H1 (cell line): ENCODE measurements at regions of chr1 and their contacts with region 1.

Region 1: DNA sequence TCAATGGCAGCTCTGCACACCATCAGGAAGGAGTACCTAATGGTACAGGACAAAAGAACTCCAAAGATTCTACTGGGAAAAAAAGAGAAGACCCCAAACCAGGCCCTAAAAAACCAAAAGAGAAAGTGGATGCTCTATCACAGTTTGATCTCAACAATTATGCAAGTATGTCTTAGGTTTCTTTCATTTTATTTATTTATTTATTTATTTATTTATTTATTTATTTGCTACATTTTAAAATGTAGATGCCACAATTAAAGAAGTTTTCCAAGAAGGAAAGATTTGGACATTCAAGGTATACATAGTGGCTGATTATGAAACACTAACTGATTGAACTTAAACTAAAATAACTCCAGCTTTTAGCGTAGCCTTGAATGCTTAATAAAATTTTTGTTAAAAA is 60.2 kb downstream of the PRRC2C start:
- DNase-seq: no peak
- H3K4me3 ChIP-seq: no peak overlapping the region
- H3K27ac ChIP-seq: no peak overlapping the region
- H3K4me1 ChIP-seq: no peaks in the 10 kb centered on the region
- H3K27me3 ChIP-seq: no peaks in the 10 kb centered on the region
- CTCF ChIP-seq: no peak
- EP300 ChIP-seq: no peak
- POLR2A ChIP-seq: no peak
- RAD21 ChIP-seq: no peak

Region 2: GRCh38 chr1:171389171-171389570 is 156.4 kb before region 1 on chr1:
- CTCF ChIA-PET with region 1: no interaction called
- POLR2A ChIA-PET with region 1: no interaction called
- DNase-seq: no peak
- H3K4me3 ChIP-seq: no peak overlapping the region
- H3K27ac ChIP-seq: no peak overlapping the region
- H3K4me1 ChIP-seq: no peaks in the 10 kb centered on the region
- H3K27me3 ChIP-seq: no peaks in the 10 kb centered on the region
- CTCF ChIP-seq: no peak
- EP300 ChIP-seq: no peak
- POLR2A ChIP-seq: no peak
- RAD21 ChIP-seq: no peak

Region 3: DNA sequence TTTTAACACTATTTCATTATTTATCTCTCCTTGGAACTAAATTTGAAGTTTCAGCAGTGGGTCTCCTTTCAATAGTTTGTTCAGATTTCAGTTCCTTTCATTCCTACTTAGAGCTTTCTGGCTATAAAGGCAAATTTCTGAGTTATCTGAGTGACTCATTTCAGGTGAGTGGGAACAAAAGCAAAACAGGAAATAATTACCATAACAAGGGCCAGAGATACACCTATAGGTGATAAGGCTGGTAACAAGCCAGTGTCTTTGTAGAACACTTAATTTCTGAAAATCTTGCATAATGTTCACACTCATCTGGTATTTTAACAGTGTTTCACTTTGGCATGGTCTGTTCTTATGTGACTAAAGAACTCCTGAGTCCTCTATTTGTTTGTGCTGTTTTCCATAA is 124.7 kb before region 1 on chr1:
- CTCF ChIA-PET with region 1: no interaction called
- POLR2A ChIA-PET with region 1: no interaction called
- DNase-seq: no peak
- H3K4me3 ChIP-seq: no peak overlapping the region
- H3K27ac ChIP-seq: no peak overlapping the region
- H3K4me1 ChIP-seq: peaks cover 5 to 10% (median 7%) of the 10 kb centered on the region in 4 experiments; a peak in 5 of 7 replicates
- H3K27me3 ChIP-seq: no peaks in the 10 kb centered on the region
- CTCF ChIP-seq: no peak
- EP300 ChIP-seq: no peak
- POLR2A ChIP-seq: no peak
- RAD21 ChIP-seq: no peak

Region 4: GRCh38 chr1:171515299-171515698 is 30.2 kb before region 1 on chr1:
- CTCF ChIA-PET with region 1: no interaction called
- POLR2A ChIA-PET with region 1: no interaction called
- DNase-seq: no peak
- H3K4me3 ChIP-seq: no peak overlapping the region
- H3K27ac ChIP-seq: no peak overlapping the region
- H3K4me1 ChIP-seq: no peaks in the 10 kb centered on the region
- H3K27me3 ChIP-seq: no peaks in the 10 kb centered on the region
- CTCF ChIP-seq: no peak
- EP300 ChIP-seq: no peak
- POLR2A ChIP-seq: no peak
- RAD21 ChIP-seq: no peak

Region 5: GRCh38 chr1:171532520-171532919 is 13.0 kb before region 1 on chr1:
- CTCF ChIA-PET with region 1: interaction called, 3 read pairs
- POLR2A ChIA-PET with region 1: interaction called, 10 read pairs
- DNase-seq: no peak
- H3K4me3 ChIP-seq: no peak overlapping the region
- H3K27ac ChIP-seq: no peak overlapping the region
- H3K4me1 ChIP-seq: no peaks in the 10 kb centered on the region
- H3K27me3 ChIP-seq: no peaks in the 10 kb centered on the region
- CTCF ChIP-seq: no peak
- EP300 ChIP-seq: no peak
- POLR2A ChIP-seq: no peak
- RAD21 ChIP-seq: no peak

Region 6: DNA sequence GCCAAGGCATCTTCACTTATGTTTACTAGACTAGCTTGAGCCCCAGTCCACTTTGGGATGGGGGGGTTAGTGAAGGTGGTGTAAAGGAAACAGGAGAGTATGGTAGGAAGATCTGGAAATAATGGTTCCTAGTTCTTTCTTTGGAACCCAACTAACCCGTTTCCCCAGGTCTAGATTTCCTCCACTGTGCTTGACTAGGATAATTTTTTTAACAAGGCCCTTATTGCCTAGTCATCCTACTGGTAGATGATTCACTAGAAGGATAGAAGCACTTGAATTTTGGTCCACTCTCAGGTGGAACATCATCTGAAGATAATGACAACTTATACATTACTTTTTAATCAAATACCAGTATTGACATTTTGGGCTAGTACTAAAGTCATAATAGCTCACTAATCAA is 30.6 kb after region 1 on chr1:
- CTCF ChIA-PET with region 1: no interaction called
- POLR2A ChIA-PET with region 1: no interaction called
- DNase-seq: no peak
- H3K4me3 ChIP-seq: no peak overlapping the region
- H3K27ac ChIP-seq: no peak overlapping the region
- H3K4me1 ChIP-seq: no peaks in the 10 kb centered on the region
- H3K27me3 ChIP-seq: no peaks in the 10 kb centered on the region
- CTCF ChIP-seq: no peak
- EP300 ChIP-seq: no peak
- POLR2A ChIP-seq: no peak
- RAD21 ChIP-seq: no peak